Caco-2 (cell line): ENCODE measurements at regions of chr18 and their contacts with region 1.

Region 1: GRCh38 chr18:21391074-21391673 is 149.1 kb downstream of the GREB1L start:
- DNase-seq: no peak
- H3K4me3 ChIP-seq: no peak overlapping the region
- H3K4me3 Mint-ChIP-seq: no peak overlapping the region
- H3K27ac Mint-ChIP-seq: no peak overlapping the region
- H3K4me1 ChIP-seq: peaks cover 14% of the 10 kb centered on the region; the same call in 1 of the 2 replicates
- H3K4me1 Mint-ChIP-seq: no peaks in the 10 kb centered on the region
- H3K27me3 ChIP-seq: no peaks in the 10 kb centered on the region
- H3K27me3 Mint-ChIP-seq: no peaks in the 10 kb centered on the region
- CTCF ChIP-seq: no peak

Region 2: DNA sequence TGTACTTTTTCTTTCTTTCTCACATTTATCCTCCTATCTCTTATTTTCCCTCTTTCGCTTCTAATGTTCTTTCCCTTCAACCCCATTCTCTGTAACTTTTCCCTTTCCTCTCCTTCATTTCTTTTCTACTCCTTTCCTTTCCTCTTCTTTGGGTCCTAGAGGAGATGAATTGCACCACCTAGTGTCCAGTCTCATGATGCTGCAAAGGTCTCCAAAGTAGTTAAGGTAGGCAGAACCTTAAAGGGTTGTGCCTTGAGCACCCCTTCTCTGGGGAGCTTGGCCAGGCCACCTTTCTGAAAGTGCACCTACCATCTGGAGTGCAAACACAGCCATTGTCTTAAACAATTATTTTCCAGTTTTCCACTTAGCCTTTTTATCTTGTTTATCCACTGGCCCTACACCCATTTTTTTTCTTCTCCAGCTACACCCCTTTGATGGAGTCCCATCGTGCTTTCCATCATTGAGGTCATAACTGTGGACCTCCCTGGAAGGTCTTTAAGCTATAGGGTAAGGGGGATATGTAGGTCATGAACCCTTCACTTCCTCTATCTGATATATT is 53.4 kb after region 1 on chr18:
- CTCF ChIA-PET with region 1: no interaction called
- POLR2A ChIA-PET with region 1: no interaction called
- intact Hi-C with region 1: loop called (anchors 10 kb)
- DNase-seq: peak; percentile 50 to 61
- H3K4me3 ChIP-seq: no peak overlapping the region
- H3K4me3 Mint-ChIP-seq: no peak overlapping the region
- H3K27ac Mint-ChIP-seq: peak overlapping the region; percentile 2
- H3K4me1 ChIP-seq: peaks cover 19% of the 10 kb centered on the region
- H3K4me1 Mint-ChIP-seq: peaks cover 12% of the 10 kb centered on the region
- H3K27me3 ChIP-seq: no peaks in the 10 kb centered on the region
- H3K27me3 Mint-ChIP-seq: no peaks in the 10 kb centered on the region
- CTCF ChIP-seq: peak; percentile 78 to 89